ENCODE measurements at regions of chr9 and their contacts with region 1.

Region 1: GRCh38 chr9:98998441-98999151 is 54.9 kb downstream of the COL15A1 start:
- H3K4me3 ChIP-seq: no peak overlapping the region
- H3K27ac ChIP-seq: no peak overlapping the region
- H3K4me1 ChIP-seq: no peaks in the 10 kb centered on the region
- CTCF ChIP-seq: peak; percentile 61

Region 2: DNA sequence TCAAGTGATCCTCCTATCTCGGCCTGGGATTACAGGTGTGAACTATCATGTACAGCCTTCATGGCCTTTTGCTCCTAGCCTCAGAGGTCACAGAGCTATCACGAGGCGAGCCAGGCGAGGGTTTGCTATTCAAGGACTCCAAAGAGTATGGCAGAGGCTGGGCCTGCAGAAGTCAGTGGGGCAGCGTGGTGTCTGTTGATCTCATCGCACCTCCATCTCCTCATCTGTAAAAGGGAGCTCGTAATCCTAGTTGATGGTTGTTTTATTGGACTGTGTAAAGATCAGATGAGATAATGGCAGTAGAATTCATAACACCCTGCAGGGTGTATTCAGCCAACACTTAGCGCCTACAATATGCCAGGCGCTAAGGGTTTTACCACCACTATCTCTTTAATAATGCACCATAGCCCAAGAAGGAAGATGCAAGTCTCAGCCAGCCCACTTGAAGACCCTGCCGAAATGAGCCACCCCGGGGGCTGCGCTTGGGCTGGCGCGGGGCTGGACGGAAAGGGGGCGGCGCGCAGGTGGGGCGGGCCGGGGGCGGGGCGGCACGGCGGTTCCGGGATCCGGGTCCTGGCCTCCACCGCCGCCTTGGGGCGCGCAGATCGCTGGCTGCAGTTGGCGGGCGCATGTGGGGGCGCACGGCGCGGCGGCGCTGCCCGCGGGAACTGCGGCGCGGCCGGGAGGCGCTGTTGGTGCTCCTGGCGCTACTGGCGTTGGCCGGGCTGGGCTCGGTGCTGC is 191.4 kb before region 1 on chr9 and contains the start of gene GALNT12:
- CTCF ChIA-PET with region 1: interaction called, 20 read pairs
- POLR2A ChIA-PET with region 1: no interaction called
- H3K4me3 ChIP-seq: peak within 1 kb of the TSS; percentile 46
- H3K27ac ChIP-seq: peak within 1 kb of the TSS; percentile 9; the same call in 1 of the 2 replicates
- H3K4me1 ChIP-seq: no peaks in the 10 kb centered on the region
- CTCF ChIP-seq: no peak

Region 3: GRCh38 chr9:98836206-98836605 is 162.4 kb before region 1 on chr9:
- CTCF ChIA-PET with region 1: no interaction called
- POLR2A ChIA-PET with region 1: no interaction called
- H3K4me3 ChIP-seq: no peak overlapping the region
- H3K27ac ChIP-seq: no peak overlapping the region
- H3K4me1 ChIP-seq: no peaks in the 10 kb centered on the region
- CTCF ChIP-seq: no peak

Region 4: GRCh38 chr9:98848450-98849149 is 150.0 kb before region 1 on chr9:
- CTCF ChIA-PET with region 1: interaction called, 105 read pairs
- POLR2A ChIA-PET with region 1: no interaction called
- H3K4me3 ChIP-seq: no peak overlapping the region
- H3K27ac ChIP-seq: no peak overlapping the region
- H3K4me1 ChIP-seq: no peaks in the 10 kb centered on the region
- CTCF ChIP-seq: peak; percentile 69; the same call in 1 of the 2 replicates

Region 5: GRCh38 chr9:98887918-98888510 is 110.6 kb before region 1 on chr9:
- CTCF ChIA-PET with region 1: interaction called, 10 read pairs
- POLR2A ChIA-PET with region 1: no interaction called
- H3K4me3 ChIP-seq: no peak overlapping the region
- H3K27ac ChIP-seq: no peak overlapping the region
- H3K4me1 ChIP-seq: peaks cover 8% of the 10 kb centered on the region; the same call in 1 of the 2 replicates
- CTCF ChIP-seq: no peak

Region 6: DNA sequence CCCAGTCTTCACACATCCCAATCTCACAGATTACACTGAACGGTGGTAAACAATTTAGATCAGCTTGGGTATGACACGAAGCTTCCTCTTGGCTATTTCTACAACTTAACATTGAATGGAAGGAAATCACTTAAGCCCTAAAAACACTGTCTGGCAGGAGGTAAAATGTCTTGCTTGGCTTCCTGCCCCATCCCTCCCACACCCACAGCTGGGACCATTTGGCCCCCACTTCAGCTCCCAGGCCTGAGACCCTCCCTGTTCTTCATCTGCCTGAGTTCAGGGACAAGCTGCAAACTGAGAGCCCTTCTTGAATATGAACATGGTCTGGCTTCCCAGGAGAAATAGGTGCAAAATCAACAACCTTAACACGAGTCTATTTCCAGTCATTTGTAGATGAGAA is 58.3 kb before region 1 on chr9:
- CTCF ChIA-PET with region 1: no interaction called
- POLR2A ChIA-PET with region 1: no interaction called
- H3K4me3 ChIP-seq: no peak overlapping the region
- H3K27ac ChIP-seq: no peak overlapping the region
- H3K4me1 ChIP-seq: no peaks in the 10 kb centered on the region
- CTCF ChIP-seq: no peak

Region 7: DNA sequence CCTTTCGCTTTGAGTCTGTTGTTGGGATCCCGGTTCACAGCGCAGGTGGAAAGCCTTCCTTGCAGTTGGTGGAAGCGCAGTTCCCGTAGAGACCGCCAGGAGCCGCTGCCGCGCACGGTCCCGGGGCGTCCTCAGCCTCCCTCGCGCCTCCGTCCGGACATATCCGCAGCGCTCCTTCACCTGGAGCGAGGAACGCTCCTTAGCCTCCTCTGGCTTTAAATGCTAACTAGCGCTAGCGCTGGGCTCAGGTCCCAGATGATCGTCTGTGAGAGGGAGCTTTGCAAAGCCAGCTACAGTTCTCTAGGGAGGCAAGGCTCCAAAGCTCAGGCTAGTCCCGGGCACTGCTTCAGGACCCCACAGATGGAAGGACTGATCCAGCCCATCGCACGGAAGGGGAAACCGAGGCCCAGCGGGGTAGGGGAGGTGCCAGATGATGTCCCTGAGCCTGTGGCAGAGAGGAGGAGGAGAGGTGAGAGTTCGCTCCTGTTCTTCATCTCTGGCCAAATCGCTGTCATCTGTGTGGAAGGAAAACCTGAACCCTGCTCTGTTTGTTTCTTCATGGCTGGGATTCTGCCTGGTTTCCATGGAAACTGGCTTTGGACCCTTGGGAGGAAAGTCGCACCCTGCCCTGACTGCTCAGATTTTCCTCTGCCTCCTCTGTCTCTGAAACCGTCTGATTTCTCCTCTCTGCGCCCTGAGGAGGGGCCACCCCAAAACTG is 23.4 kb before region 1 on chr9:
- CTCF ChIA-PET with region 1: interaction called, 51 read pairs
- POLR2A ChIA-PET with region 1: no interaction called
- H3K4me3 ChIP-seq: no peak overlapping the region
- H3K27ac ChIP-seq: no peak overlapping the region
- H3K4me1 ChIP-seq: no peaks in the 10 kb centered on the region
- CTCF ChIP-seq: peak; percentile 85

Region 8: DNA sequence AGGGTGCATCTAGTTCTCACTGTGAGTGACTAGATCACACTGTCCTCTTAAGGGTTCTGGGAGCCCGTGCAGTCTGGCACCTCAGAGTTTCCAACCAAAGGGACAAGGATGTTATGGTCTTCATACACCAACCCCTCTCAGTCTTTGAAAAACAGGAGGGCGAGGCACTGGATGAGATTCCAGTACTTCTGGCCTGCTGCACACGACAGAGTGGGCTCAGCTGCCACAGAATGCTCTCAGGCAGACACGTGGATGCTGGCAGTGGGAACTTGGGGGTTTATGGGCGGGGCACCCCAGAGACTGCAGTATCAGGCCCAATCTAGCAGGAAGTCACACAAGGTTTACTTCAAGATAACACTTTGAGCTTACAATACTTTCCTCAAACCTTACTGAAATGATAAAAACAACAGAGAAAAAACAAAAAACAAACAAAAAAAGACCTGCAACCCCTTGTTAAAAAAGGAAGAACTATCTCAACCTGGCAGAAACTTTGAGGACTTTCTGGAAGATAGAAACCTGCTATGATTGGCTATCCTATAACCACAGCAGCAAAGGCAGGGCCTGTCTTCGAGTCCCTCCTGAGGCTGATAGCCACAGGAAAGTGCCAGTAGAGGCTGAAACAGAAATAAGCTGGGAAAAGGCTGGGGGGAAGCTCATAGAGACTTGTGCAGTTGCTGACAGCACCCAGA is 78.0 kb after region 1 on chr9:
- CTCF ChIA-PET with region 1: no interaction called
- POLR2A ChIA-PET with region 1: no interaction called
- H3K4me3 ChIP-seq: no peak overlapping the region
- H3K27ac ChIP-seq: no peak overlapping the region
- H3K4me1 ChIP-seq: no peaks in the 10 kb centered on the region
- CTCF ChIP-seq: no peak

Region 9: GRCh38 chr9:99140685-99141314 is 142.2 kb after region 1 on chr9:
- CTCF ChIA-PET with region 1: interaction called, 89 read pairs
- POLR2A ChIA-PET with region 1: no interaction called
- H3K4me3 ChIP-seq: no peak overlapping the region
- H3K27ac ChIP-seq: no peak overlapping the region
- H3K4me1 ChIP-seq: no peaks in the 10 kb centered on the region
- CTCF ChIP-seq: peak; percentile 56